ENCODE measurements at regions of chr11 and their contacts with region 1.

Region 1: DNA sequence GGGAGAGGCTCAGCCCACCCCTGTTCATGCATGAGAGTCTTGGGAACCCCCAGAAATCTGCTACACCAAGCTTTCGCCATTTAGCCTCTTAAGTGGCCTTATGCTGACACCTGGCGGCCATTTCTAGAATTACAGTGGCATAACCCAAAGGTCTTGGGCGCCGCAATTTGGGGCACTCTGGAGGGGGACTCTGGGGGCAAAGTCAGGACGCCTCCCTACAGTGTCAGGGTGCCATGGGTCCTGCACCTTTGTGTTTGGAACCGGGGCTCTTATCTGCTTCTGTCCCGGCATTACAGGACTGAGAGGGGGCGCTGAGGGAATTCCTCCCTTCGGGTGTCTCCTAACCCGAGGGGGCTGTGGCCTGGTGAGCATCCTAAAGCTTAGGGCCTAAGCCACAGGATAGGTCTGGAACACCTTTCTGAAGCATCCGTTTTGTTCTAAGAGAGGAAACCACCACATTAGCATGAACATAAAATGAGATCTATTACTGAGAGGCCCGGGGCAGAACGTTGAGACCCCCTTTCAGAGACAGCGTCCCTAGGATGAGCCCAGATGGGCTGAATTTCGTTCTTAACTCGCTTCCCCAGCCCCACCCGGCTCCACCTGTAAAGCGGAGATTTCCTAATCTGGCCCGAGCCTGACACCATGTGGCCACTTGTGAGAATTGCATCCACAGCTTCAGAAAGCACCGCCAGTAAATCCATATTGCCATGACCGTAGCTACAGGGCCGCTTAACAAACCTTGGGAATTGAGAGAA is 9.3 kb downstream of the INS start:
- DNase-seq: peak in 2 of 4 donors; percentile 73 to 83
- ATAC-seq: peak; percentile 90
- H3K4me3 ChIP-seq: no peak overlapping the region
- H3K27ac ChIP-seq: no peak overlapping the region
- H3K4me1 ChIP-seq: peaks cover 5 to 8% of the 10 kb centered on the region in 2 donors
- H3K27me3 ChIP-seq: peaks cover 24 to 74% of the 10 kb centered on the region in 2 donors
- CTCF ChIP-seq: peak; percentile 72 to 81

Region 2: DNA sequence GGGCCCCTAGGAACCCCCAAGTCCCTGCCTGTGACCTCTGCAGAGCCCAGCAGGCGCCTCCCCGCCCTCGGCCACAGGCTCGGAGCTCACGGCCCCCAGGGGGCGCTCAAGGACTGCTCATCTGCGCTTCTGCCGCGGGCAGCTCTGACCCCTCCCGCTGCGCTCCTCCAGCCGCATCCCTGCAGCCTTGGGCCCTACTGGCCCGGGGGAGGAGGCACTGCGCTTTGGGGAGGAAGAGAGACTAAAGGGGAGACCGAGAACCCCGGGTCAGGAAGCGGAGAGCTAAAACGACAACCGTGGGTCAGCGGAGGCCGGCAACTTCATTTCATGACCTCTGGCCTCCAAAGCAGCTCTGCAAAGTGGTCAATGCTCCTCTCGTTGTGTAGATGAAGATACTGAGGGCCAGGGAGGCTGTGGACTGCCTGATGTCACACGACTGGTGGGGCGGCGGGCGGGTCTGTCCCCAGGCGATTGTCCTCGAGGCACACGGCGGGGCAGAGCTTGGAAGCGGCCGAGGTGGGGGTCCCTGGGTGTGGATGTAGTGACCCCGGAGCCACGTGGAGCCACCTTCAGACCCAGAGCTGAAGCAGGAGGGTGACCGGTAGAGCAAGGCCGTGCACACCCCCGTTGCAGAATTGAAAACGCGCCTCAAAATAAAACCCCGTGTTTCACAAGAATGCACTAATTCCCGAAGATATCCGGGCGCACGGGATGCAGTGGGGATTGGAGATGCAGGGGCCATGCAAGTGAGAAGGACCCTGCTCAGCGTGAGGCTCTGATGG is 457.4 kb before region 1 on chr11:
- intact Hi-C with region 1: loop called in 1 of 2 experiments (anchors 5 kb)
- DNase-seq: peak; percentile 68 to 98 (median 87)
- ATAC-seq: peak; percentile 99
- H3K4me3 ChIP-seq: peak overlapping the region in 1 of 2 donors; percentile 20
- H3K27ac ChIP-seq: no peak overlapping the region
- H3K4me1 ChIP-seq: peaks cover 5 to 14% of the 10 kb centered on the region in 2 donors
- H3K27me3 ChIP-seq: peaks cover 0 to 28% of the 10 kb centered on the region in 2 donors
- CTCF ChIP-seq: peak; percentile 91 to 99

Region 3: DNA sequence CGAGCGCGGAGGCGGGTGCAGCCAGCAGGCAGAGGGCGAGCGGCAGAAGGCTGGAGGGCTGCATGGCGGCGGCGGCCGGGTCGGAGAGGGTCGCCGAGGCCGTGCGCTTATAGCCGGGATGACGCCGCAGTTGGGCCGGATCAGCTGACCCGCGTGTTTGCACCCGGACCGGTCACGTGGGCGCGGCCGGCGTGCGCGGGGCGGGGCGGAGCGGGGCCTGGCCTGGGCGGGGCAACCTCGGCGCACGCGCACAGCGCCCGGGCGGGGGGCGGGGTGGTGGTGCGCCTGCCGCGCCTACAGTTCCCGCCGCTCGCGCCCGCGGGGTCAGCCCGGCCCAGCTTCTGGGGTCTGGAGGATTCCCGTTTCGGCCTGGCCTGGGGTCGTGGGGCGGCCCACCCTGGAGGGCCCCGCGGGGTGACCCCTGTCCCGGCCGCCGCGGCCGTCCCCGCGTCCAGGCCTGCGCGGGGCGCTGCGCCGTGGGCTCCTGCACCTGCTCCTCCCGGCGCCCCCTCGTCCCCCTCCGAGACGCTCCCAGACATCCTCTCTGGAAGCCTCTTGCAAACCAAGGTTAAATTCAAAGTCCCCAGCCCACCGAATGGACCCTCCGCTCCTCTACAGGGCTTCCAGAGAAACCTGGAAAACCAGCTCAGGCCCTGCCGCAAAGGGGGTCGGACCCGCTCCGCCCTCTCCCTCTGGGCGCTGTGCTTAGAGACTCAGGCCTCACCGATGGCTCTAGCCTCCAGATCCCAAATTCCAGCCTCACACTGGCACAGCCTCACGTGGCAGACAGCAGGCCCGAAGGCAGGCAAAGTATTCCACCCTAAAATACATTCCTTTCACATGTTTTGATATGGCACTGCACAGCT is 387.6 kb before region 1 on chr11 and contains the start of gene CTSD:
- intact Hi-C with region 1: no loop called
- DNase-seq: peak; percentile 75 to 98 (median 89)
- ATAC-seq: peak; percentile 78
- H3K4me3 ChIP-seq: peak within 1 kb of the TSS; percentile 78 to 98
- H3K27ac ChIP-seq: peak within 1 kb of the TSS; percentile 88 to 93
- H3K4me1 ChIP-seq: peaks cover 29 to 51% of the 10 kb centered on the region in 2 donors
- H3K27me3 ChIP-seq: no peaks in the 10 kb centered on the region
- CTCF ChIP-seq: no peak
- polyA plus RNA-seq, gene CTSD: 124 to 171 (median 145) TPM

Region 4: GRCh38 chr11:1837171-1838076 is 314.3 kb before region 1 on chr11:
- intact Hi-C with region 1: loop called in 1 of 2 experiments (anchors 5 kb)
- DNase-seq: peak in 3 of 4 donors; percentile 72 to 89 (median 82)
- ATAC-seq: peak; percentile 24
- H3K4me3 ChIP-seq: no peak overlapping the region
- H3K27ac ChIP-seq: no peak overlapping the region
- H3K4me1 ChIP-seq: peaks cover 5 to 46% of the 10 kb centered on the region in 2 donors
- H3K27me3 ChIP-seq: peaks cover 0 to 11% of the 10 kb centered on the region in 2 donors
- CTCF ChIP-seq: peak; percentile 72 to 85

Region 5: DNA sequence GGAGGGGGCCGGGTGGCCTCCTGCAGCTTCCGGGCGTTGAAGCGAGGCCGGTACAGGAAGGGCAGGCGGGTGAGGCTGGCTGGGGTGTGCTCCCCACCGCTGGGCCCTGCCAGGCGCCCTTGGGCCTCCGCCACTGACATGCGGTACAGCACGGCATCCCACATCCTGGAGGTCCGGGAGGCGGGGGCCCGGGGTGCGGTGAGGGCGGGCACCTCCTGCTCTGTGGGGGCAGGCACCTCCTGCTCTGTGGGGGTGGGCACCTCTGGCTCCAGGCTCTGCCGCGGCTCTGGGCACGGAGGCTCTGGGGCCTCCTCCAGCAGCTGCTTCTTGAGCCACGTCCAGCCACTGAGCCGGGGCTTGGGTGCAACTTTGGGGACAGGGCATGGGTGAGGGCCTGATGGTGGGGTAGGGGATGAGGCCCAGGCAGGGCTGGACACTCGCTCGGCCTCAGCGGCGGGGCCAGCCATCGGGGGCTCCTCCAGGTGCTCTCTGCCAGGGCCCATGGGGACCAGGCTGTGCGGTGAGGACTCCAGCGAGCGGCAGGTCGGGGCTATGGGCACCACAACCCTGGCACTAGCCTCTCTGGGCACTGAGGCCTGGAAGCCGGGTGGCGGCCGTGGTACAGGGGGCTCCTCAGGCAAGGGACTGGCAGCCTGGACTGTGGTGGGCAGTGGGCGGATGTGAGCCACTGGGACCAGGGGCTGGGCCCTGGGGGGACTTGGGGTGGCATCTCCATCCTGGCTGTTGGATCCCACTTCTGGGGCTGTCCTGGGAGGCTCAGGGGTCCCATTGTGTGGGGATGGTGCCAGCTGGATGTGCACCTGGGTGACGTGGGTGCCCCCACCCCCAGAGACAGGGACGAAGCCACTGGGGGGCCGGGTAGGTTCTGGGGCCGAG is 262.2 kb before region 1 on chr11:
- intact Hi-C with region 1: loop called in 1 of 2 experiments (anchors 5 kb)
- DNase-seq: peak in 2 of 4 donors; percentile 41 to 82
- ATAC-seq: peak; percentile 44
- H3K4me3 ChIP-seq: no peak overlapping the region
- H3K27ac ChIP-seq: no peak overlapping the region
- H3K4me1 ChIP-seq: peaks cover 0 to 27% of the 10 kb centered on the region in 2 donors
- H3K27me3 ChIP-seq: peaks cover 0 to 30% of the 10 kb centered on the region in 2 donors
- CTCF ChIP-seq: no peak

Region 6: DNA sequence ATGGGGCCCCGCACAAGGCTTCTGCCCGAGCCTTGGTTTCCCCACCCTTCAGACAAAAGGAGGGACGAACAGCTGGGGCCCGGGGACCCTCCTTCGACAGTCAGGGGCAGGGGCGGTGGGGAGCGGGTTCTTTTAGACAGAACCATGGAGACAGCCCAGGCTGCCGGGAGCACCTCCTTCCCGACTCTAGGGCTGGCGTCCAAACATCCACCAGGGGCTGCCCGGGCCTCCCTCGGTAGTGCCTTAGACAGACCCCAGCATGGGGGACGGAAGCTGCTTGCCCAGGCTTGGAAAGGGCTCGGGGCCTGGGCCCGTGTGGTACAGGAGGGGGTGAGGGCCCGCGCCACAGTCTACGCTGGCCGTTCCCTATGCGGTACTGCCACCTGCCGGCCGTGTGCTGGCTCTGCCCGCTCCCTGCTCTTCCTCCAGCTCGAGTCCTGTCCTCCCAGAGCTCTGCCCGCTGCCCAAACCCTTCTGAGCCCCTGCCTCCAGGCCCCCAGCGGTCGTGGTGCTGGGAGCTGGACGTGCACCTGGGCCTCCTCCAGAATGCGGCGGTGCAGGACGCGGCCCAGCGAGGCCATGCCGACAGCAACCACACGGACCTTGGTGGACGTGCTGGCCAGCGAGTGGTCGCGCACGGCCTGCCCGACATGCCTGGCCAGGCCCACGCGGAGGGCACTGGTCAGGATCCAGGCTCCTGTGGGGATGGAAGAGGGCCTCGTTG is 269.0 kb after region 1 on chr11:
- intact Hi-C with region 1: no loop called
- DNase-seq: peak; percentile 73 to 93 (median 81)
- ATAC-seq: peak; percentile 97
- H3K4me3 ChIP-seq: no peak overlapping the region
- H3K27ac ChIP-seq: no peak overlapping the region
- H3K4me1 ChIP-seq: peaks cover 0 to 14% of the 10 kb centered on the region in 2 donors
- H3K27me3 ChIP-seq: peaks cover 0 to 16% of the 10 kb centered on the region in 2 donors
- CTCF ChIP-seq: peak; percentile 90 to 96

Measured in left lung (tissue), 14 donors.